H1 (cell line): ENCODE measurements at regions of chr10 and their contacts with region 1.

Region 1: DNA sequence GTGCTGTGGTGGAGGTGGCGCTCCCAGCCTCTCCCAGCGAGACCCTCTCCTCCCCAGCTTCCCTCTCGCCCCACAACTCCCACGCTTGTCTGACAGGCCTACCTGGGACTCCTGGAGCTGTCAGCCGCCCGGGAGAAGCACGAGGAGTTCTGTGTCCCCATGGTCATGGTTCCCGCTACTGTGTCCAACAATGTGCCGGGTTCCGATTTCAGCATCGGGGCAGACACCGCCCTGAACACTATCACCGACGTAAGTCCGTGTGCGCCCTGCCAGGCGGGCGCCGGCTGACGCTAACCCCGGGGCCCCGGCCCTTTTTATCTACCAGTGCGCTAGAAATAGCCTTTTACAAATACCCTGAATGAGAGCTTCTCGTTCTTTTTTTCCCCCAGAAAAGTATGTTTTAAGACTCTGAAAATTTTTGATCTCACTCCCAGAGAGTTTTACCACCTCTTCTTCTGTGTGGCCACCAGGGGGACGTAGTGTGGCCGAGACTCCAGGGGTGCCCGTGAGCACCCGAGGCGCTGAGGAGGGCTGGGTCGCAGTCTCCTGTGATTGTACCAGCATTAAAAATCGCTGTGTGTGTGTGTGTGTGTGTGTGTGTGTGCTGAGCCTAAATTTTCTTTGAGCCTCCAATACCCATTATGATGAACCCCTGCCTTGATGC is 52.6 kb downstream of the PFKP start:
- DNase-seq: no peak
- H3K4me3 ChIP-seq: no peak overlapping the region
- H3K27ac ChIP-seq: no peak overlapping the region
- H3K4me1 ChIP-seq: no peaks in the 10 kb centered on the region
- H3K27me3 ChIP-seq: no peaks in the 10 kb centered on the region
- CTCF ChIP-seq: peak; percentile 51 to 55 (median 55)
- EP300 ChIP-seq: no peak
- POLR2A ChIP-seq: no peak
- RAD21 ChIP-seq: peak in 1 of 2 experiments; percentile 23; a peak in 2 of 4 replicates

Region 2: GRCh38 chr10:2938869-2939268 is 181.1 kb before region 1 on chr10:
- CTCF ChIA-PET with region 1: no interaction called
- POLR2A ChIA-PET with region 1: no interaction called
- DNase-seq: no peak
- H3K4me3 ChIP-seq: no peak overlapping the region
- H3K27ac ChIP-seq: no peak overlapping the region
- H3K4me1 ChIP-seq: peaks cover 0 to 3% (median 0%) of the 10 kb centered on the region in 4 experiments; a peak in 1 of 7 replicates
- H3K27me3 ChIP-seq: peaks cover 0 to 2% (median 0%) of the 10 kb centered on the region in 4 experiments; a peak in 1 of 7 replicates
- CTCF ChIP-seq: no peak
- EP300 ChIP-seq: no peak
- POLR2A ChIP-seq: no peak
- RAD21 ChIP-seq: no peak

Region 3: GRCh38 chr10:3107426-3107961 is 12.4 kb before region 1 on chr10:
- CTCF ChIA-PET with region 1: interaction called, 11 read pairs
- POLR2A ChIA-PET with region 1: interaction called, 3 read pairs
- DNase-seq: no peak
- H3K4me3 ChIP-seq: no peak overlapping the region
- H3K27ac ChIP-seq: no peak overlapping the region
- H3K4me1 ChIP-seq: peaks cover 0 to 4% (median 0%) of the 10 kb centered on the region in 4 experiments; a peak in 1 of 7 replicates
- H3K27me3 ChIP-seq: no peaks in the 10 kb centered on the region
- CTCF ChIP-seq: no peak
- EP300 ChIP-seq: no peak
- POLR2A ChIP-seq: no peak
- RAD21 ChIP-seq: no peak

Region 4: GRCh38 chr10:3136763-3137611 is 17.1 kb after region 1 on chr10:
- CTCF ChIA-PET with region 1: interaction called, 47 read pairs
- POLR2A ChIA-PET with region 1: interaction called, 4 read pairs
- DNase-seq: no peak
- H3K4me3 ChIP-seq: no peak overlapping the region
- H3K27ac ChIP-seq: no peak overlapping the region
- H3K4me1 ChIP-seq: no peaks in the 10 kb centered on the region
- H3K27me3 ChIP-seq: no peaks in the 10 kb centered on the region
- CTCF ChIP-seq: no peak
- EP300 ChIP-seq: no peak
- POLR2A ChIP-seq: no peak
- RAD21 ChIP-seq: no peak